K562 (cell line): ENCODE measurements at regions of chr4 and their contacts with region 1.

Region 1: DNA sequence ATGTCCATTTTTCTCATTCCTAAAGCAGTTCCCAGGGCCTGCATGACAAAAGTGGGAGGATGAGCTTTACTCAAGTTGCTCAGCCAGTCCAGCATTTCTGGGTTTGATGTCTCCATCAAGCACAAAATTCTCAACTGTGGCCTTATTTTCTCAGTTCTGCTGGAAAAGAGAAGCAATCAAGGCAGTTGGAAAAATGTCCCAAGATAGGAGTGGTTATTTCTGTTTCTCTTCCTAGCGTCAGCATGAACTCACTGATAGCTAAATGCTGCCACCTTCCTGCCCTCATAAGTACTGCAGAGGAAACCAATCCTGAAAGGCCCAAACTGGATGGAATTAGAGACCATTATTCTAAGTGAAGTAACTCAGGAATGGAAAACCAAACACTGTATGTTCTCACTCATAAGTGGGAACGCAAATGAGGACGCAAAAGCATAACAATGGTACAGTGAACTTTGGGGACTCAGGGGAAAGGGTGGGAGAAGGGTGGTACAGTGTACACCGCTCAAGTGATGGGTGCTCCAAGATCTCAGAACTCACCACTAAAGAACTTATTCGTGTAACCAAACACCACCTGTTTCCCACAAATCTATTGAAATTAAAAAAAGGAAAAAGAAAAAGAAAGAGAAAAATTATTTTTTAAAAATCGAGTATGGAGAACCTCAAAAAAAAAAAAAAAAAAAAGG is 29.6 kb downstream of the ADH7 start:
- DNase-seq: peak; percentile 29 to 71 (median 54)
- ATAC-seq: peak; percentile 92
- H3K4me3 ChIP-seq: no peak overlapping the region
- H3K27ac ChIP-seq: no peak overlapping the region
- H3K4me1 ChIP-seq: no peaks in the 10 kb centered on the region
- H3K27me3 ChIP-seq: no peaks in the 10 kb centered on the region
- CTCF ChIP-seq: peak; percentile 73 to 88 (median 82)
- EP300 ChIP-seq: no peak
- POLR2A ChIP-seq: no peak
- RAD21 ChIP-seq: peak; percentile 90 to 93

Region 2: DNA sequence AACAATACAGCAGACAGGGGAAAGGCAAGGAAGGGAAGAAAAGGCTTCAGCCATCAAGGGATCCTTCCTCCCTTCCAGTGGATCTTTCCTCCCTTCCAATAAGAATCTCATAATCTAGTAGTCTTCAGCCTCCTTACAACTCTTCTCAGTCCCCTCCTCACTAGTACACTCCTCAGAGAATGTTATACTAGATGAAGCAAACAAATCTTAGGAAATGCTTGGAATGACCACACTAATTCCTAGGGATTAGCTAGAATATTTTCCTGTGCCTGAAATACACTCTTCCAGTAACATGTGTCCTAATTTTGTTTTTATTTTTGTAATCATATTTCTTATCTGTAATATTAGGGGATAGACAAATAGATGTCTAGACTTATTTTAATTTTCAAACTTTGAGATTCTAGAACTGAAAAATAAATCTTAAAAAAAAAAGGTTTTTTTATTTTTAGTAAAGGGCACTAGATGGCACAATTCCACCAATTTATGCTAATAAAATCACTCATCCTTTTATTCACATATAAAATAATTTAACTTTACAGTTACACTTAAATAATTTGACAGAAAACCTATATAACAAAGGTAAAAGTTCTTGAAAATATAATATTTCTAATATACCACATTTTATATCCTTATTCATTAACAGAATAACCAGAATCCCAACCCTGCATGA is 1255.3 kb before region 1 on chr4:
- CTCF ChIA-PET with region 1: no interaction called
- POLR2A ChIA-PET with region 1: no interaction called
- in situ Hi-C with region 1: no loop called
- intact Hi-C with region 1: loop called (anchors 5 kb)
- DNase-seq: no peak
- ATAC-seq: no peak
- H3K4me3 ChIP-seq: no peak overlapping the region
- H3K27ac ChIP-seq: no peak overlapping the region
- H3K4me1 ChIP-seq: no peaks in the 10 kb centered on the region
- H3K27me3 ChIP-seq: no peaks in the 10 kb centered on the region
- CTCF ChIP-seq: peak in 1 of 3 experiments; percentile 43; a peak in 2 of 6 replicates
- EP300 ChIP-seq: no peak
- POLR2A ChIP-seq: no peak
- RAD21 ChIP-seq: peak; percentile 40 to 50

Region 3: GRCh38 chr4:98745366-98745765 is 660.2 kb before region 1 on chr4:
- CTCF ChIA-PET with region 1: no interaction called
- POLR2A ChIA-PET with region 1: no interaction called
- in situ Hi-C with region 1: loop called (anchors 10 kb)
- intact Hi-C with region 1: loop called (anchors 5 kb)
- DNase-seq: peak in 2 of 4 experiments; percentile 29 to 78
- ATAC-seq: peak; percentile 87
- H3K4me3 ChIP-seq: no peak overlapping the region
- H3K27ac ChIP-seq: no peak overlapping the region
- H3K4me1 ChIP-seq: no peaks in the 10 kb centered on the region; a peak in 1 of 5 replicates
- H3K27me3 ChIP-seq: no peaks in the 10 kb centered on the region
- CTCF ChIP-seq: peak; percentile 69 to 84 (median 72)
- EP300 ChIP-seq: no peak
- POLR2A ChIP-seq: no peak
- RAD21 ChIP-seq: peak; percentile 64 to 80

Region 4: GRCh38 chr4:98939892-98940298 is 465.7 kb before region 1 on chr4:
- CTCF ChIA-PET with region 1: no interaction called
- POLR2A ChIA-PET with region 1: no interaction called
- in situ Hi-C with region 1: no loop called
- intact Hi-C with region 1: loop called (anchors 5 kb)
- DNase-seq: peak; percentile 34 to 73 (median 45)
- ATAC-seq: peak; percentile 88
- H3K4me3 ChIP-seq: no peak overlapping the region
- H3K27ac ChIP-seq: no peak overlapping the region
- H3K4me1 ChIP-seq: no peaks in the 10 kb centered on the region
- H3K27me3 ChIP-seq: no peaks in the 10 kb centered on the region
- CTCF ChIP-seq: peak; percentile 63 to 82 (median 80); a peak in 5 of 6 replicates
- EP300 ChIP-seq: no peak
- POLR2A ChIP-seq: no peak
- RAD21 ChIP-seq: peak; percentile 48 to 62

Region 5: DNA sequence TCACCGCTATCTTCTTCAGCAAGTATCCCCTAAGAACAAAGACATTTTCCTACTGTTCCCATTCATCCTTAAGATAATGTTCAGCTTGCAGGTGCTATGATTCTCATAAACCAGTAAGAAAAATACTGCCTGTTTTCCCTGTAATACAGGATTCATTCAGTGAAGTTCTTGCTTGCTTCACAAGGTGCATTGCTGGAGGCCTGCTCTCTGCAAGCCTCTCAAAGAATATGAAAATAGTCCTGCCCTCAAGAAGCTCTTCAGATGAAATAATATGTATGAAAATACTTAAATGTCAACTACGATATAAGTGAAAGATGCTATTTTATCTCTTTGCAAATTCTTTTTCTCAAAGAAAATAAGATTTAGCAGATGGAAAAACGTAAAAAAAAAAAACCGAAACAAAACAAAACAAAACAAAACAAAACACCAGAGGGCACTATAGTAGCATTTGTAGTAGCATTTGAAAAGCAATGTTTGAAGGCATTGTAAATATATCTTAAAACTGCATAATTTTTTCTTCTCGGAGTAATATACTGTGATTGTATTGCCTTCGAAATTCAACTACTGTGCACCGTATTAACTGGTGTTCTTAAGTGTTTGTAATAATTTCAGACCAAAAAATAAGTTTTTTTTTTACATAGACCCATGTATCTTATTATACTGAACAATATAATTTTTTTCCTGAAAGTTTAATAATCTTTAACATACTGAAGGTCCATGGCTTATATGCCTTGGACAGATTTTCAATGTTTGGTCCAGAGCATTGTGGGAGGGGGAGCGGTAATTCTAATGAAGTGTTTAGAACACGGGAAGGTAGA is 287.5 kb before region 1 on chr4:
- CTCF ChIA-PET with region 1: interaction called, 10 read pairs
- POLR2A ChIA-PET with region 1: no interaction called
- in situ Hi-C with region 1: no loop called
- intact Hi-C with region 1: loop called (anchors 1 kb)
- DNase-seq: peak in 1 of 4 experiments; percentile 15
- ATAC-seq: peak; percentile 59; the same call in 1 of the 3 replicates
- H3K4me3 ChIP-seq: no peak overlapping the region
- H3K27ac ChIP-seq: no peak overlapping the region
- H3K4me1 ChIP-seq: no peaks in the 10 kb centered on the region
- H3K27me3 ChIP-seq: no peaks in the 10 kb centered on the region
- CTCF ChIP-seq: peak in 1 of 3 experiments; percentile 47; a peak in 2 of 6 replicates
- EP300 ChIP-seq: no peak
- POLR2A ChIP-seq: no peak
- RAD21 ChIP-seq: no peak